GM12878 (cell line): ENCODE measurements at regions of chr1 and their contacts with region 1.

Region 1: DNA sequence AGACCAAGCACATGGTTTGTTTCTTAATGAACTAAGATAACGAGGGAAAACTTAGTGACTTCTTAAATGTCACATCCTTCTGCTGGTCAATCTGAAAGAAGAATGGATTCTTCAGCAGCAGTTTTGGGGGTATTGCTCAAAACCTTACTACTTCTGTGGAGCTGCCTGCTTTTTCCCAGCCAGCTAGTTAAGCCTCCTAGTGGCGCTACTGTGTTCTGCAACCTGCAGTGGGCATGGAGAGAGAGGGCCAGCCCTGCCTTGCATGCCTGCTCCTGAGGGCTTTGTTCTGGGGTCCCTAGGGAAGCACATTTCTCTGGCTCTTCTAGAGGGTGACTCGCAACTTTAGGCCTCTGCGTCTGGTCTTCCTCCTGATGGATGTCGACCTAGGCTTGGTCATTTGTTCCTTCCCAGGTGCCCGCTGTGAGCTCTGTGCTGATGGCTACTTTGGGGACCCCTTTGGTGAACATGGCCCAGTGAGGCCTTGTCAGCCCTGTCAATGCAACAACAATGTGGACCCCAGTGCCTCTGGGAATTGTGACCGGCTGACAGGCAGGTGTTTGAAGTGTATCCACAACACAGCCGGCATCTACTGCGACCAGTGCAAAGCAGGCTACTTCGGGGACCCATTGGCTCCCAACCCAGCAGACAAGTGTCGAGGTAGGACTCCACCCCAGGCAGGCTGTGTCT is 42.0 kb downstream of the LAMC2 start:
- DNase-seq: no peak
- ATAC-seq: peak; percentile 96
- H3K4me3 ChIP-seq: no peak overlapping the region
- H3K27ac ChIP-seq: no peak overlapping the region
- H3K4me1 ChIP-seq: peaks cover 6% of the 10 kb centered on the region; the same call in 1 of the 2 replicates
- H3K27me3 ChIP-seq: no peaks in the 10 kb centered on the region
- CTCF ChIP-seq: peak; percentile 80 to 90 (median 86)
- EP300 ChIP-seq: no peak
- POLR2A ChIP-seq: no peak
- RAD21 ChIP-seq: peak; percentile 87

Region 2: DNA sequence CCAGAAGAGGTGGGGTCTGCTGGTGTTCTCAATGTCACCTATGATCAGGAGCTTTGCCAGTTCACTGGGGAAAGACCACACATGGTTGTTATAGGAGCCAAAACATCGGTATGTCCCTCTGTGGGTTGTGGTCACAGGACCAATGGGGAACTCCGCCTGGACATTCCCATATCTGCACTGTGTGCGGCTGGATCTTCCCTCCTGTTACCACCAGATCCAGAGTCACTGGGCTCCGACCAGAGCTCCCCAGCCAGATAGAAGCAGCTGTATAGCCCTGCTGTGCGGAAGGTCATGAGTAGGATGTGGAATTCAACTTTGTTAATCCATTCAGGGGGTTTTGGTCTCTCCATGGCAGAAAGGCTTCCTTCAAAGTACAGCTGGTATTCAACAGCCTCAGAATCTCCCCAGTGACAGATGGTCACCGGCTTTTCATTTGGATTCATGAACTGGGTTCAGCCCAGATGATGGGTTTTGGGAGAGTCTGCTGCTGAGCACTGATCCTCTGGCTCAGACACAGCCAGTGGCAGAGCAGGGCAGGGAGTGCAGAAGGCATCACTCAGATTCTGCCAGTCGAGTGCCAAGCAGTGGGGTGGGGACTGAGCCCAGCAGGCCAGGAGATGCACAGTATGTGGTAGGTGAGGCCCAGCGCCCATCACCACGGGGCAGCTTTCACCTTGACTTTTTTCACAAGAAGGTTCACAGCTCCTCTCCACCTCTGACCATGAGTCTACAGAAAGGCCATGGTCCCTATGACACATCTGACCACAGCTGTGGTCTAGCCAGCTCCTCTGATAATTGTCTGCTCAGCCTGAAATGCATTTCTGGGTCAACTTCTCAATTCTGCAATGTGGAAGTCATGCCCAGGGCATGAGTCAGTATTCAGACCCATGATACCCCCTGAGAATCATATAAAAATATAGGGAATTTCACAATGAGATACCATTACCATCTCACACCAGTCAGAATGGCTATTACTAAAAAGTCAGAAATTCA is 272.2 kb before region 1 on chr1:
- CTCF ChIA-PET with region 1: interaction called, 126 read pairs
- POLR2A ChIA-PET with region 1: interaction called, 3 read pairs
- RAD21 ChIA-PET with region 1: interaction called, 33 read pairs
- SMC1A ChIA-PET with region 1: interaction called, 66 read pairs
- in situ Hi-C with region 1: loop called (anchors 5 kb)
- intact Hi-C with region 1: no loop called
- DNase-seq: no peak
- ATAC-seq: peak; percentile 70
- H3K4me3 ChIP-seq: no peak overlapping the region
- H3K27ac ChIP-seq: no peak overlapping the region
- H3K4me1 ChIP-seq: no peaks in the 10 kb centered on the region
- H3K27me3 ChIP-seq: no peaks in the 10 kb centered on the region; a peak in 1 of 4 replicates
- CTCF ChIP-seq: no peak
- EP300 ChIP-seq: no peak
- POLR2A ChIP-seq: no peak
- RAD21 ChIP-seq: no peak

Region 3: GRCh38 chr1:183023601-183024316 is 204.3 kb before region 1 on chr1:
- CTCF ChIA-PET with region 1: interaction called, 6 read pairs
- POLR2A ChIA-PET with region 1: no interaction called
- RAD21 ChIA-PET with region 1: interaction called, 5 read pairs
- SMC1A ChIA-PET with region 1: interaction called, 4 read pairs
- in situ Hi-C with region 1: no loop called
- intact Hi-C with region 1: loop called (anchors 5 kb)
- DNase-seq: no peak
- ATAC-seq: peak; percentile 77
- H3K4me3 ChIP-seq: peak overlapping the region; percentile 74
- H3K27ac ChIP-seq: peak overlapping the region; percentile 5
- H3K4me1 ChIP-seq: peaks cover 20% of the 10 kb centered on the region
- H3K27me3 ChIP-seq: no peaks in the 10 kb centered on the region
- CTCF ChIP-seq: peak; percentile 64 to 76 (median 68)
- EP300 ChIP-seq: no peak
- POLR2A ChIP-seq: peak; percentile 65
- RAD21 ChIP-seq: peak; percentile 47; the same call in 1 of the 2 replicates

Region 4: DNA sequence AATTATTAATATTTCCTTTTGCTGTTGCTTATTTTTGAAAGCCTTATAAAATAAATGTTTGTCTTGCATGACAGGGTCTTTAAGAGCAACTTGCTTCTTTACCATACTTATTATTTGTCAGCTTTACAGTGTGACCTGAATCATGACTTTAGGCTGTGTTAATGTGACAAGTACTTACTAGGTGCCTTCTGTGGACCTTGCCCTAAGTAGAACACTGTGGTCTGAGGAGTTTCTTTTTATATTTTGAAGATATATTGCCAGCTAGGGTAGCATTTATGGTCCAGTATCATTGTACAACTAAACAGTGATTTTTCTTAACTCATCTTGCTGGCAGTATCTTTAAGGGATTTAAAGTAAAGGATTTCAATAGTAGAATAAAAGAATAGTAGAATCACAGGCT is 87.5 kb before region 1 on chr1:
- CTCF ChIA-PET with region 1: interaction called, 5 read pairs
- POLR2A ChIA-PET with region 1: no interaction called
- RAD21 ChIA-PET with region 1: interaction called, 8 read pairs
- SMC1A ChIA-PET with region 1: interaction called, 11 read pairs
- in situ Hi-C with region 1: no loop called
- intact Hi-C with region 1: no loop called
- DNase-seq: no peak
- ATAC-seq: no peak
- H3K4me3 ChIP-seq: no peak overlapping the region
- H3K27ac ChIP-seq: no peak overlapping the region
- H3K4me1 ChIP-seq: no peaks in the 10 kb centered on the region; the same call in 1 of the 2 replicates
- H3K27me3 ChIP-seq: no peaks in the 10 kb centered on the region
- CTCF ChIP-seq: no peak
- EP300 ChIP-seq: no peak
- POLR2A ChIP-seq: no peak
- RAD21 ChIP-seq: no peak

Region 5: DNA sequence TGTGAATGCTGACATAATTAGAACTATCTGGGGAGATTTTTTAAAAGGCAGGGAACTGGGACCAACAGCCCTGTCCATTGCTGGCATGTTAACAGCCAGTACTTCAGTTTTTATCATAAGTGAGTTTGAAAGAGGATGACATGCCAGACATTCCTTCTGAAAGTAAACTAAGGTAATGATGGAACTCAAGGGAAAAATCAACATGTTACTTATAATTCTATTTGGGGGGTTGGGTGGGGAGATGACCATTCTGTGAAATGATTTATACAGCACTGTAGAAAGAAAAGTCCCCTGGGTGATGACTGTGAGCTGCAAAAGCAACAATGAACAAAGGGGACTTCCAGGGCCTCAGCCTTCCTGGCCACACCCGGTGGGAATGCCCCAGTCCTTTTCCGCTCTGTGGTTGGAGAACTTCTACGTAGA is 47.5 kb before region 1 on chr1:
- CTCF ChIA-PET with region 1: interaction called, 7 read pairs
- POLR2A ChIA-PET with region 1: no interaction called
- RAD21 ChIA-PET with region 1: interaction called, 4 read pairs
- SMC1A ChIA-PET with region 1: interaction called, 33 read pairs
- in situ Hi-C with region 1: no loop called
- intact Hi-C with region 1: no loop called
- DNase-seq: peak; percentile 57
- ATAC-seq: peak; percentile 97
- H3K4me3 ChIP-seq: no peak overlapping the region
- H3K27ac ChIP-seq: peak overlapping the region; percentile 86
- H3K4me1 ChIP-seq: peaks cover 11% of the 10 kb centered on the region
- H3K27me3 ChIP-seq: no peaks in the 10 kb centered on the region
- CTCF ChIP-seq: no peak
- EP300 ChIP-seq: peak; percentile 63 to 64; a peak in 1 of 4 replicates
- POLR2A ChIP-seq: no peak
- RAD21 ChIP-seq: no peak

Region 6: GRCh38 chr1:183209533-183210158 is 18.5 kb before region 1 on chr1:
- CTCF ChIA-PET with region 1: interaction called, 13 read pairs
- POLR2A ChIA-PET with region 1: no interaction called
- RAD21 ChIA-PET with region 1: interaction called, 7 read pairs
- SMC1A ChIA-PET with region 1: interaction called, 9 read pairs
- in situ Hi-C with region 1: no loop called
- intact Hi-C with region 1: no loop called
- DNase-seq: no peak
- ATAC-seq: peak; percentile 97
- H3K4me3 ChIP-seq: no peak overlapping the region
- H3K27ac ChIP-seq: no peak overlapping the region
- H3K4me1 ChIP-seq: no peaks in the 10 kb centered on the region
- H3K27me3 ChIP-seq: no peaks in the 10 kb centered on the region; a peak in 1 of 4 replicates
- CTCF ChIP-seq: no peak
- EP300 ChIP-seq: no peak
- POLR2A ChIP-seq: no peak
- RAD21 ChIP-seq: no peak

Region 7: DNA sequence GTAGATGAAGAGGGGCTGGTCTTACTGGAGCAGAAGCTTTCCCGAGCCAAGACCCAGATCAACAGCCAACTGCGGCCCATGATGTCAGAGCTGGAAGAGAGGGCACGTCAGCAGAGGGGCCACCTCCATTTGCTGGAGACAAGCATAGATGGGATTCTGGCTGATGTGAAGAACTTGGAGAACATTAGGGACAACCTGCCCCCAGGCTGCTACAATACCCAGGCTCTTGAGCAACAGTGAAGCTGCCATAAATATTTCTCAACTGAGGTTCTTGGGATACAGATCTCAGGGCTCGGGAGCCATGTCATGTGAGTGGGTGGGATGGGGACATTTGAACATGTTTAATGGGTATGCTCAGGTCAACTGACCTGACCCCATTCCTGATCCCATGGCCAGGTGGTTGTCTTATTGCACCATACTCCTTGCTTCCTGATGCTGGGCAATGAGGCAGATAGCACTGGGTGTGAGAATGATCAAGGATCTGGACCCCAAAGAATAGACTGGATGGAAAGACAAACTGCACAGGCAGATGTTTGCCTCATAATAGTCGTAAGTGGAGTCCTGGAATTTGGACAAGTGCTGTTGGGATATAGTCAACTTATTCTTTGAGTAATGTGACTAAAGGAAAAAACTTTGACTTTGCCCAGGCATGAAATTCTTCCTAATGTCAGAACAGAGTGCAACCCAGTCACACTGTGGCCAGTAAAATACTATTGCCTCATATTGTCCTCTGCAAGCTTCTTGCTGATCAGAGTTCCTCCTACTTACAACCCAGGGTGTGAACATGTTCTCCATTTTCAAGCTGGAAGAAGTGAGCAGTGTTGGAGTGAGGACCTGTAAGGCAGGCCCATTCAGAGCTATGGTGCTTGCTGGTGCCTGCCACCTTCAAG is 15.3 kb after region 1 on chr1:
- CTCF ChIA-PET with region 1: interaction called, 16 read pairs
- POLR2A ChIA-PET with region 1: no interaction called
- RAD21 ChIA-PET with region 1: interaction called, 5 read pairs
- SMC1A ChIA-PET with region 1: interaction called, 6 read pairs
- in situ Hi-C with region 1: no loop called
- intact Hi-C with region 1: no loop called
- DNase-seq: no peak
- ATAC-seq: no peak
- H3K4me3 ChIP-seq: no peak overlapping the region
- H3K27ac ChIP-seq: no peak overlapping the region
- H3K4me1 ChIP-seq: no peaks in the 10 kb centered on the region
- H3K27me3 ChIP-seq: no peaks in the 10 kb centered on the region
- CTCF ChIP-seq: no peak
- EP300 ChIP-seq: no peak
- POLR2A ChIP-seq: no peak
- RAD21 ChIP-seq: no peak

Region 8: DNA sequence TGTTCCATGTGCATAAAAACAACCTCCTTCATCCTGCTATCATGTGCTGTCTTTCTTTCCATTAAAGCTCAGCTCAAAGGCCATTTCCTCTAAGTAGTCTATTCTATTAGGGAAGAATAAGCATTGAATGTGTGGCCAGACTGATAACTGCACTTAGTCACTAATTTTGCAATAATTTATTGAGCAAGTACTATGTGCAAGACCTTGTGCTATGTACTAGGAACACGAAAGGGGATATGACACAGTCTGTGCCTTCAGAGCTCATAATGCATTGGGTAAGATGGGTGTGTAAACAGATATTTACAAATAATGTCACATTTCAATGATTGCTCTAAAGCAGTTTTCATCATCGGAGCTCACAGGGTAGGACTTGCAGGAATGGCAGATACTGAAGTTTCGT is 135.9 kb after region 1 on chr1:
- CTCF ChIA-PET with region 1: no interaction called
- POLR2A ChIA-PET with region 1: no interaction called
- RAD21 ChIA-PET with region 1: no interaction called
- SMC1A ChIA-PET with region 1: no interaction called
- in situ Hi-C with region 1: no loop called
- intact Hi-C with region 1: no loop called
- DNase-seq: no peak
- ATAC-seq: no peak
- H3K4me3 ChIP-seq: no peak overlapping the region
- H3K27ac ChIP-seq: no peak overlapping the region
- H3K4me1 ChIP-seq: no peaks in the 10 kb centered on the region
- H3K27me3 ChIP-seq: peaks cover 0 to 2% of the 10 kb centered on the region in 2 experiments; a peak in 2 of 4 replicates
- CTCF ChIP-seq: no peak
- EP300 ChIP-seq: no peak
- POLR2A ChIP-seq: no peak
- RAD21 ChIP-seq: no peak